CD8-positive, alpha-beta memory T cell (primary cell): ENCODE measurements at regions of chr17 and their contacts with region 1.

Region 1: GRCh38 chr17:82205719-82206508 is 6.7 kb downstream of the CCDC57 start:
- DNase-seq: peak; percentile 67 to 86 (median 78)
- H3K4me3 ChIP-seq: peak overlapping the region; percentile 30
- H3K4me3 Mint-ChIP-seq: peak overlapping the region; percentile 26 to 79 (median 65)
- H3K27ac ChIP-seq: peak overlapping the region; percentile 69
- H3K27ac Mint-ChIP-seq: peak overlapping the region; percentile 93 to 98 (median 96)
- H3K4me1 ChIP-seq: peaks cover 26% of the 10 kb centered on the region
- H3K4me1 Mint-ChIP-seq: peaks cover 36 to 56% (median 38%) of the 10 kb centered on the region in 3 donors
- H3K27me3 ChIP-seq: no peaks in the 10 kb centered on the region
- H3K27me3 Mint-ChIP-seq: no peaks in the 10 kb centered on the region

Region 2: DNA sequence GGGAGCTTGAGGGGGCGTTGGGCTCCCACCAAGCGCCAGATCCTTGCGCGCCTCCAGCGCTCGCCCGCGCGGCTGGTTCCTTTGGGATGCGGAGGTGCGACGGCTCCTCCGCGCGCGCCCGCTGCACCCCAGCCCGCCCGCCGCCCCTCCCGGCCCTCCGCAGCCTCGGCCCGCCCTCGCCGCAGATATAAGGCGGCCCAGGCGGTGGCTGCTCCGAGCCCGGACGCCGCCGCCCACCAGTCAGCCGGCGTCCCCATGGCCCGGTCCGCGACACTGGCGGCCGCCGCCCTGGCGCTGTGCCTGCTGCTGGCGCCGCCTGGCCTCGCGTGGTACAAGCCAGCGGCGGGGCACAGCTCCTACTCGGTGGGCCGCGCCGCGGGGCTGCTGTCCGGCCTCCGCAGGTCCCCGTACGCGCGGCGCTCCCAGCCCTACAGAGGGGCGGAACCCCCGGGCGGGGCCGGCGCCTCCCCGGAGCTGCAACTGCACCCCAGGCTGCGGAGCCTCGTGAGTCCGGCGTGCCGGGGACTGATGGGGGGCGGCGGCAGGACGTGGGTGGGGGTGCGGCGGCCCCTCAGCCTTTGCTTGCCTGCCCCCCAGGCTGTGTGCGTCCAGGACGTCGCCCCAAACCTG is 303.8 kb before region 1 on chr17 and contains the start of gene NPB:
- CTCF ChIA-PET with region 1: no interaction called
- POLR2A ChIA-PET with region 1: no interaction called
- DNase-seq: no peak
- H3K4me3 ChIP-seq: no peak within 1 kb of the TSS
- H3K4me3 Mint-ChIP-seq: peak within 1 kb of the TSS in 5 of 7 donors; percentile 28 to 81 (median 39)
- H3K27ac ChIP-seq: no peak within 1 kb of the TSS
- H3K27ac Mint-ChIP-seq: no peak within 1 kb of the TSS
- H3K4me1 ChIP-seq: no peaks in the 10 kb centered on the region
- H3K4me1 Mint-ChIP-seq: peaks cover 4 to 7% (median 6%) of the 10 kb centered on the region in 3 donors
- H3K27me3 ChIP-seq: peaks cover 7% of the 10 kb centered on the region
- H3K27me3 Mint-ChIP-seq: peaks cover 8 to 12% of the 10 kb centered on the region in 2 donors
- total RNA-seq, gene NPB: 0.57 to 0.62 TPM

Region 3: GRCh38 chr17:82175951-82176350 is 30.0 kb before region 1 on chr17:
- CTCF ChIA-PET with region 1: no interaction called
- POLR2A ChIA-PET with region 1: no interaction called
- DNase-seq: no peak
- H3K4me3 ChIP-seq: no peak overlapping the region
- H3K4me3 Mint-ChIP-seq: no peak overlapping the region
- H3K27ac ChIP-seq: no peak overlapping the region
- H3K27ac Mint-ChIP-seq: no peak overlapping the region
- H3K4me1 ChIP-seq: no peaks in the 10 kb centered on the region
- H3K4me1 Mint-ChIP-seq: no peaks in the 10 kb centered on the region
- H3K27me3 ChIP-seq: no peaks in the 10 kb centered on the region
- H3K27me3 Mint-ChIP-seq: peaks cover 0 to 1% of the 10 kb centered on the region in 2 donors

Region 4: DNA sequence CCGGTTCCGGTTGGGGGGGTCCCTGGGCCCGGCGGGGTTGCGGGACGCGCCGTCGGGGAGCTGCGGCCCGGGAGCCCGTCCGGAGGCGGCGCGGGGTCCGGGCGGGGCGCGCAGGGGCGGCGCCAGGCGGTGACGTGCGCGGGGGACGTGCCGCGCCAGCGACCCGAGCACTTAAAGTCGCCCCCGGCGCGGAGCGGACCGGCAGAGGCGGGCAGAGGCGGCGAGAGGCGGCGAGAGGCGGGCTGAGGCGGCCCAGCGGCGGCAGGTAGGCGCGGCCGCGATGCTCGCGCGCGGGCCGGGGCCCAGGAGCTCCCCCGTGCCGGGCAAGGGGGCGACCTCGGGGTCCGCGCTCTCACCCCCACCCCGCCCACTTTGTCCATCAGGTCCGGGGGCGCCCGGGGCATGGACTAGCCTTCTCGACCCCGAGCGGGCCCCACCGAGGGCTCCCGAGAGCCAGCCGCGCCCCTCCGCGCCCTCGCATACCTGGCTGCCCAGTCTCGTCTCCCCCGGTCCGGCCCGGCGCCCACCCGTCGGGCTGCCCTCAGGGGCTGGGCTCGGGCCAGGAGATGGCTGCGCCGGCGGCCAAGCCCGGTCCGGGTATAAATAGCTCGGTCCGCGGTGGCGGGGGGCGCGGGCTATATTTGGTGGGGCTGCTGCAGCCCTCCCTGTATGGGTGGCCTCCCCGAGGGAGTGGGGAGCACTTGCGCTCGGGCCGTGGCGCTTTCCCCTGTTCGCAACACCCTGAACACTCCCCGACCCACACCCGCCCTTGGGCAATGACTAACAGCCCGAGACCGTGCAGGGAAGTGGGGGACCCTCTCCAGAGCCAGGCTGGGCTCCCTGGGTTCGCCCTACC is 23.2 kb after region 1 on chr17 and contains the start of gene SLC16A3:
- CTCF ChIA-PET with region 1: interaction called, 7 read pairs
- POLR2A ChIA-PET with region 1: interaction called, 10 read pairs
- DNase-seq: peak; percentile 60 to 72 (median 63)
- H3K4me3 ChIP-seq: peak within 1 kb of the TSS; percentile 49
- H3K4me3 Mint-ChIP-seq: peak within 1 kb of the TSS; percentile 80 to 92 (median 84)
- H3K27ac ChIP-seq: peak within 1 kb of the TSS; percentile 61
- H3K27ac Mint-ChIP-seq: peak within 1 kb of the TSS; percentile 82 to 97 (median 91)
- H3K4me1 ChIP-seq: peaks cover 31% of the 10 kb centered on the region
- H3K4me1 Mint-ChIP-seq: peaks cover 5 to 28% (median 13%) of the 10 kb centered on the region in 3 donors
- H3K27me3 ChIP-seq: no peaks in the 10 kb centered on the region
- H3K27me3 Mint-ChIP-seq: no peaks in the 10 kb centered on the region
- total RNA-seq, gene SLC16A3: 27.5 to 31.8 TPM

Region 5: GRCh38 chr17:82236142-82236981 is 30.4 kb after region 1 on chr17:
- CTCF ChIA-PET with region 1: interaction called, 13 read pairs
- POLR2A ChIA-PET with region 1: interaction called, 3 read pairs
- DNase-seq: peak; percentile 57 to 78 (median 67)
- H3K4me3 ChIP-seq: no peak overlapping the region
- H3K4me3 Mint-ChIP-seq: peak overlapping the region in 1 of 7 donors; percentile 48
- H3K27ac ChIP-seq: peak overlapping the region; percentile 75
- H3K27ac Mint-ChIP-seq: peak overlapping the region in 6 of 8 donors; percentile 36 to 89 (median 73)
- H3K4me1 ChIP-seq: peaks cover 49% of the 10 kb centered on the region
- H3K4me1 Mint-ChIP-seq: peaks cover 21 to 59% (median 24%) of the 10 kb centered on the region in 3 donors
- H3K27me3 ChIP-seq: no peaks in the 10 kb centered on the region
- H3K27me3 Mint-ChIP-seq: no peaks in the 10 kb centered on the region